Activated CD8-positive, alpha-beta memory T cell treated with anti-CD3 and anti-CD28 coated beads, Interleukin-2, amount 10 ng/mL, durations not matched to agents 7 days and 5 days (primary cell): ENCODE measurements at regions of chr12 and their contacts with region 1.

Region 1: DNA sequence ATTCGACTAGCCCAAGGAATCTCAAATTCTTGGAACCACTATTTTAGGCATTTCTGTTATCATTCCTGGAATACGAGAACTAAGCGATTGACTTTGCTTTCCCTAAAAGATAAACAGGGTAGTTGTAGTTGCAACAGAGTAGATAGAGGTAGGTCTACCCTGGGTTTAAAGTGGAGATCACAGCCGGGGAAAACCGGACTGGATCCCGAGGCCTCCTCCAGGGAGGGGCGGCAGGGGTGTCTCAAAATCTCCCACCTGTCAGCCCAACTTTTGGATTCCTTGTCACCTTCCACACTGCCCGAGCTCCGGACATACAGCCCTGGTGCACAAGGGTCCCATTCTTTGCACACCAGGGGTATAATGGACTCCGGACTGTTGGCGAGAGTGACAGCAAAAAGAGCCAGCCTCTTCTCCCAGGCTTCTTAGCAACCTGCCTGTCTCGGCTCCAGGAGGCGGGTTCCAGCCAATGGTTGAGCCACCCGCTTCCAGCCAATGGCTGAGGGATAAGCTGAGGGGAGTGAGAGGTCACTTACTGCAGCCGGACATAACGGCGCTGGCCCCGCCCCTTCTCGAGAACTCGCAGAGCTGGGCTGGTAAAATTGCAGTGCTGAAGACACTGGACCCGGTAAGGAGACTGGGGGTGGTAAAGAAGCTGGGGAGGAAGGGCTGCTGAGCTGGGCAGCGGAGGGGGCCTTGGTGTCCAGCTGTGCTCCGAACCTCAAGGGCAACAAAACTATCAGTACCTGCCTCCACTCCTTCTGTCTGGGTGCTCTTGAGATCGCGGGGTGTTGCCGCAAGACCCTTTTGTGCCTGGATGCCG is at the start of gene SUOX:
- DNase-seq: peak; percentile 71
- ATAC-seq: peak; percentile 75
- H3K4me3 Mint-ChIP-seq: peak within 1 kb of the TSS; percentile 68
- H3K27ac Mint-ChIP-seq: peak within 1 kb of the TSS; percentile 48
- H3K4me1 Mint-ChIP-seq: peaks cover 37% of the 10 kb centered on the region
- H3K27me3 Mint-ChIP-seq: no peaks in the 10 kb centered on the region
- total RNA-seq, gene SUOX: 2.5 to 14.6 TPM

Region 2: GRCh38 chr12:55582066-55582465 is 414.9 kb before region 1 on chr12:
- CTCF ChIA-PET with region 1: no interaction called
- DNase-seq: no peak
- ATAC-seq: no peak
- H3K4me3 Mint-ChIP-seq: no peak overlapping the region
- H3K27ac Mint-ChIP-seq: no peak overlapping the region
- H3K4me1 Mint-ChIP-seq: no peaks in the 10 kb centered on the region
- H3K27me3 Mint-ChIP-seq: peaks cover 15% of the 10 kb centered on the region

Region 3: DNA sequence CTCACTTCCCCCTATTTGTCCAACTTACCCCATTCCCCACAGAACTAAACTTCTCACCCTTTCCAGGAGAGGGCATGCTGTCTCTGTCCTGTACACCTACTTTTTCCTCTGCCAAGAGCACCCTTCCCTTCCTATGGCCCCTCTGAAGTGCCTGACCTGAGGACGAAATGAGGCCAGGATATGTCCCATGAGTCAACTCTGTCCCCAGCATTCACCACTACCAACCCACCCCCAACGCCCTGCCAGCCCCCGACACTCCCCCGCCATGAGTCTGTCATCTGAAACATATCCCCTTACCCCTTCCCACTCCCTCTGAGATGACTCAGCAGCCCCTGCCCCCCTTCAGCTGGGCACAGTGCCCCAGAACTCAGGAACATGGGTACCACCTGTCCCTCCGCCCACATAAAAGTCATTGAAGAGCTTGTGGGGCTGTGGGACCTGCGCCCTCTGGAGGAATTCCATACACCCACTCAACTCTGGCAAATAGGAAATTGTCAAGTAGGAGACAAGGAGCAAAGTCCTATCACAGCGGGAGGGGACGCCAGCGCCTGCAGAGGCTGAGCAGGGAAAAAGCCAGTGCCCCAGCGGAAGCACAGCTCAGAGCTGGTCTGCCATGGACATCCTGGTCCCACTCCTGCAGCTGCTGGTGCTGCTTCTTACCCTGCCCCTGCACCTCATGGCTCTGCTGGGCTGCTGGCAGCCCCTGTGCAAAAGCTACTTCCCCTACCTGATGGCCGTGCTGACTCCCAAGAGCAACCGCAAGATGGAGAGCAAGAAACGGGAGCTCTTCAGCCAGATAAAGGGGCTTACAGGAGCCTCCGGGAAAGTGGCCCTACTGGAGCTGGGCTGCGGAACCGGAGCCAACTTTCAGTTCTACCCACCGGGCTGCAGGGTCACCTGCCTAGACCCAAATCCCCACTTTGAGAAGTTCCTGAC is 315.5 kb before region 1 on chr12:
- CTCF ChIA-PET with region 1: no interaction called
- DNase-seq: no peak
- ATAC-seq: peak; percentile 57
- H3K4me3 Mint-ChIP-seq: no peak overlapping the region
- H3K27ac Mint-ChIP-seq: no peak overlapping the region
- H3K4me1 Mint-ChIP-seq: peaks cover 10% of the 10 kb centered on the region
- H3K27me3 Mint-ChIP-seq: peaks cover 44% of the 10 kb centered on the region

Region 4: DNA sequence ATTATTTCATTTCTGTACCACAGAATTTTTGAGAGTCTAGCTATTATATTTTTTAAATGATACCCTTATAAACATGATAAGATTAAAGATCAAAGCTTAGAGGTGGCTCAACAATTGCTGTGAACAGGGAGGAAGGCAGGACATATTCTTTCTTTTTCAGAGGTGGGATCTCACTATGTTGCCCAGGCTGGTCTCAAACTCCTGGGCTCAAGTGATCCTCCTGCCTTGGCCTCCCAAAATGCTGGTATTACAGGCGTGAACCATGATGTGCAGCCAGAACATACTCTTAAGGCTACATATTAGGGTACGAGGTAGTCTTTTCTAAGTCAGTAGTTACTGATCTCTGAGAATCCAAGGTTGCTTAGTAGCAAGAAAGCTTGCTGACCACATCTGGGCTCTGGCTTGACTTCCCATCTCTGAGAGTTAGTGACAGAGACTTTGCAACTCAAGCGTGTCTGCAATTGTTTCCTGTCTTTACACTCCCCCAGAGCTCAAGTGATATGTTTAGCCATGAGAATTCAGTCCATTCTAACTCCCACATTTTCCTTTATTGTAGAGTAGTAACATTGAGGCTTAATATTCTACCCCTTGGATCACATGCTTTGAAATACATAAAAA is 14.5 kb before region 1 on chr12:
- CTCF ChIA-PET with region 1: interaction called, 25 read pairs
- DNase-seq: no peak
- ATAC-seq: no peak
- H3K4me3 Mint-ChIP-seq: no peak overlapping the region
- H3K27ac Mint-ChIP-seq: no peak overlapping the region
- H3K4me1 Mint-ChIP-seq: peaks cover 7% of the 10 kb centered on the region
- H3K27me3 Mint-ChIP-seq: no peaks in the 10 kb centered on the region

Region 5: GRCh38 chr12:56020423-56021184 is 23.7 kb after region 1 on chr12 and contains the start of gene IKZF4:
- CTCF ChIA-PET with region 1: interaction called, 92 read pairs
- DNase-seq: peak; percentile 45
- ATAC-seq: peak; percentile 16
- H3K4me3 Mint-ChIP-seq: peak within 1 kb of the TSS; percentile 93
- H3K27ac Mint-ChIP-seq: peak within 1 kb of the TSS; percentile 85
- H3K4me1 Mint-ChIP-seq: peaks cover 47% of the 10 kb centered on the region
- H3K27me3 Mint-ChIP-seq: no peaks in the 10 kb centered on the region
- total RNA-seq, gene IKZF4: 15.8 to 44.9 TPM

Region 6: DNA sequence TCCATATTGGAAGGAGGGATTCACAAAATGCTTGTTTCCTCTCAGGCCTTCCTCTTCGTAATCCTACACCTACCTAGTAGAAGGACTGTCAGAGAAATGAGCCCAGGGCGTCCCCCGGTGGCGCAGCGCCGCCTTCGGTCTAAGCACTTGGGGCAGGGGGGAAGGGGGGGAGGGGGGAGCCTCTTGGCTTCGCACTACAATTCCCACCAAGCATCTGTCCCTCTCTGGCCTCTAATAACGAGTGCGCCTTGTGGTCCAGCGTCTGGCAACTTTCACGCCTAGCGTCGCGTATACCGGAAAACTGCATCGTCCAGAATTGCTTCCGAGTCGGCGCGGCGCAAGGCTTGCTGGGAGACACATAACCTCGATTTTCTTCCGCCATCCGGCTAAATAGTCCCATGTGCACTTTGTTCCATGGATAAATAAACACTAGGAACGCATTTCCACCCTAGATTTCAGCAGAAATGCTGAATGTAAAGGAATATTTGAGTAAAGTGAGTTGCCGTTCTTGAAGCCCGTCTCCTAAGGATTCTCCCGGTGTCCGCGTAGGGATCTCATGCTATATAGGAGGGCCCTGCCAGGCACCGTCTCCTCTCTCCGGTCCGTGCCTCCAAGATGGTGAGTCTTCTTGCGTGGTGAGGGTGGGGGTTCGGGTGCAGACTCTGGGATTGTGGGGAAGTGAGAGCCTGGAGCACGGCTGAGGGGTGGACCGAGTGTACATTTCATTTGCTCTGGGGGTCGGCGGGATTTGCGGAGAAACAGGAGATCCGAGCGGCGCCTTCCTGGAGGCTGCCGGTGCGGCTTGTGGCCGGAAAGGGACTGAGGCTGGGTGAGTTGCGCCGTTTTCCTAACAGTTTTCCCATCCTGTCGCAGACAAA is 44.9 kb after region 1 on chr12 and contains the start of gene RPS26:
- CTCF ChIA-PET with region 1: interaction called, 58 read pairs
- DNase-seq: peak; percentile 97
- ATAC-seq: peak; percentile 91
- H3K4me3 Mint-ChIP-seq: peak within 1 kb of the TSS; percentile 93
- H3K27ac Mint-ChIP-seq: peak within 1 kb of the TSS; percentile 97
- H3K4me1 Mint-ChIP-seq: peaks cover 53% of the 10 kb centered on the region
- H3K27me3 Mint-ChIP-seq: no peaks in the 10 kb centered on the region
- total RNA-seq, gene RPS26: 27.9 to 42.2 TPM

Region 7: GRCh38 chr12:56143870-56144269 is 146.9 kb after region 1 on chr12:
- CTCF ChIA-PET with region 1: no interaction called
- DNase-seq: no peak
- ATAC-seq: no peak
- H3K4me3 Mint-ChIP-seq: no peak overlapping the region
- H3K27ac Mint-ChIP-seq: peak overlapping the region; percentile 70
- H3K4me1 Mint-ChIP-seq: peaks cover 26% of the 10 kb centered on the region
- H3K27me3 Mint-ChIP-seq: no peaks in the 10 kb centered on the region